Mammary epithelial cell (primary cell): ENCODE measurements at regions of chr10 and their contacts with region 1.

Region 1: DNA sequence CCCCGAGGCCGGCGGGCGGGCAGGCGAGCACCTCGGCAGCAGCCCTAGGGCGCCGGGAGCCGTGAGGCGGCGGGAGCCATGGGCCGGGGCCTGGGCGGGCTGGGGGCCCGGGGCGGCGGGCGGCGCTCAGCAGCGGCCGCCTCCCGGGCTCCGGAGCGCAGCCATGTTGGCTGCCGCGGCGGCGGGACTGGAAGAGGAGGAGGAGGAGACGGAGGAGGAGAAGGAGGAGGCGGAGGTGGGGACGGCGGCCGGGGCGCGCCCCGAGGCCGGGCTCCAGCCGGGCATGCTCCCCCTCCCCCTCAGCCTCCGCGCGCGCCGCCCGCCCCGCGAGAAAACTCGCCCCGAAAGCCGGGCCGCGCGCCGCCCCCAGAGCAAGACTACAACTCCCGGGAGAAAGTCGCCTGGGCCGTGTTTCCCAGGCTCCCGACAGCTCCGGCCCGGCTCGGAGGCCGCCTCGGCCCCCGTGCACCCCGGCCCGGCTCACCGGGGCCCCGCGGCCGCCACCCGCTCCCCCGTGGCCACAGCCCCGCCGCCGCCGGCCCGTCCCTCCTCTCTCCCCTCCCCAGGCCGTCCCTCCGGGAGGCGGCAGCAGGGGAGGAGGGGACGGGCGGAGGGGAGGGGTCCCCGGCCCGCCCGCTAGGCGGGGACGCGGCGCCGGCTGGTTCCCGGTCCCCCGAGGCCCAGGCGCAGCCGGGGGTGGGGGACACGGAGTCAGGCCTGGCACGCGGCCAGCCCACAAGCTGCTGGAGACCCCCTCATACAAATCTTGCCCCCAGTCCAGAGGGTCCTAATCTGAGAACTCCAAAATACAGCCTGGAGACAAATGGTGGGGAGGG is at the start of gene DLG5:
- DNase-seq: peak; percentile 42
- H3K4me3 ChIP-seq: peak within 1 kb of the TSS; percentile 71 to 87 (median 76)
- H3K27ac ChIP-seq: peak within 1 kb of the TSS; percentile 40
- H3K4me1 ChIP-seq: peaks cover 34% of the 10 kb centered on the region
- H3K27me3 ChIP-seq: no peaks in the 10 kb centered on the region
- CTCF ChIP-seq: no peak
- total RNA-seq, gene DLG5: 40.8 to 76.5 TPM

Region 2: DNA sequence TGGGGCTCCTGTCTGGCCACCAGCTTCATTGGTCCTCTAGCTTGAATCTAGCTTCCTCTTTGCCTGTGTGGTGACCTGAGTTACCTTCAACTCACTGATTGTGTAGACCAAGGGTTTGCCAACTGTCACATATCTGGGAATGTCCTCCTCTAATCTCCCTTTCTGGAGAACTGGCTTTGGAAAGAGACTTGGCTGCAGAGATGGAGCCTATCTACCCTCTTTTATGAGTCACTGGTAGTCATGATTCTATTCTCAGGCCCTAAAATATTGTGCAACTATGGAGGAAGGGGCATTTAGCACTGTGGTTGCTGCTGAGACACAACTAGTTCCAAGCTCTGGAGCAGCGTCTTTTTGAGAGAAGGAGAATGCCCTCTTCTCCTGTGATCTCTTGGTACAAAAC is 980.5 kb before region 1 on chr10:
- CTCF ChIA-PET with region 1: no interaction called
- dilution Hi-C with region 1: no loop called
- in situ Hi-C with region 1: no loop called
- intact Hi-C with region 1: no loop called
- DNase-seq: peak; percentile 10
- H3K4me3 ChIP-seq: no peak overlapping the region
- H3K27ac ChIP-seq: no peak overlapping the region
- H3K4me1 ChIP-seq: no peaks in the 10 kb centered on the region
- H3K27me3 ChIP-seq: no peaks in the 10 kb centered on the region
- CTCF ChIP-seq: no peak

Region 3: DNA sequence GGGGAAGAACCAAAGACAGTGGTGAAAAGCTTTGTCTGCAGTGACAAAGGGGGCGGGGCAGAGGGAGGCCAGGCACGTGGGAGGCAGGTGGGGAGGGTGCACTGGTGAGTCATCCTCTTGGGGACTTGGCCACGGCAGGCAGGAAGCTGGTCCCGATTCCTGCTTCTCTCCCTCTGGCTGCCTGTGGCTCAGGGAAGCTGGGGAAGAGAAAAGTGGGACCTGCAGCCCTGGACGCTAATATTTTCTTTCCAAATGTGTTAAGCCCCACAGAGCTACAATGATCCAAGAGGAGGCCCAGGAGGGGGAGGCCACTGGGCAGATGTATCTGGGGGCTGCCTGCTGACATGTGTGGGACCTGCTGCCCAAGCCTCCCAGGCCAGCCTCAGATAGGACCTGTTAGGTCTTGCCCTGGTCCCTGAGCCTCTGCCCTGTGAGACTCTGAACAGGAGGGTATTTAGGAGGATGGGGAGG is 521.0 kb before region 1 on chr10:
- CTCF ChIA-PET with region 1: no interaction called
- dilution Hi-C with region 1: no loop called
- in situ Hi-C with region 1: no loop called
- intact Hi-C with region 1: no loop called
- DNase-seq: peak; percentile 66
- H3K4me3 ChIP-seq: no peak overlapping the region
- H3K27ac ChIP-seq: no peak overlapping the region
- H3K4me1 ChIP-seq: peaks cover 39% of the 10 kb centered on the region
- H3K27me3 ChIP-seq: no peaks in the 10 kb centered on the region
- CTCF ChIP-seq: no peak

Region 4: GRCh38 chr10:77873536-77874380 is 53.0 kb before region 1 on chr10:
- CTCF ChIA-PET with region 1: interaction called, 3 read pairs
- dilution Hi-C with region 1: no loop called
- in situ Hi-C with region 1: no loop called
- intact Hi-C with region 1: loop called (anchors 2 kb)
- DNase-seq: peak; percentile 91
- H3K4me3 ChIP-seq: peak overlapping the region in 1 of 3 experiments; percentile 8
- H3K27ac ChIP-seq: peak overlapping the region; percentile 78
- H3K4me1 ChIP-seq: peaks cover 74% of the 10 kb centered on the region
- H3K27me3 ChIP-seq: no peaks in the 10 kb centered on the region
- CTCF ChIP-seq: no peak

Region 5: DNA sequence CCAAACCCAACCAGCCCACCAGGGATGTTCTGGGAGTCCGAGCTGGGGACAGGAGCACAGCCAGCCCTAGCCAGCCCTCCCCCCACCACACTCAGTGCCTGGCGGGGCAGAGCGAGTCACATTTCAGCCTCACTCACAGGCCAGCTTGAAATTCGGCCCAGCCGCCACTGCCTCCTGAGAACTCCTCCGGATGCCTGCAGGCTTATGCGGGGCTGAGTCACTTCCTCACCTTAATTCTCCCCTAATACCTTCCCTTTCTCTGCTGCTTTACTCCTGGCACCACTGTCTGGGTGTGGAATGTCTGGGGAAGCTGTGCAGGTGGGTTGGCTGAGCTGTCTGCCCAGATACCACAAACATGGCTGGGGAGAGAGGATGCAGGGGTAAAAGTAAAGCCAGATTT is 22.4 kb after region 1 on chr10:
- CTCF ChIA-PET with region 1: no interaction called
- dilution Hi-C with region 1: no loop called
- in situ Hi-C with region 1: no loop called
- intact Hi-C with region 1: loop called (anchors 2 kb)
- DNase-seq: peak; percentile 97
- H3K4me3 ChIP-seq: no peak overlapping the region
- H3K27ac ChIP-seq: peak overlapping the region; percentile 59
- H3K4me1 ChIP-seq: peaks cover 18% of the 10 kb centered on the region
- H3K27me3 ChIP-seq: no peaks in the 10 kb centered on the region
- CTCF ChIP-seq: no peak

Region 6: GRCh38 chr10:77970869-77971803 is 44.4 kb after region 1 on chr10:
- CTCF ChIA-PET with region 1: interaction called, 22 read pairs
- dilution Hi-C with region 1: no loop called
- in situ Hi-C with region 1: no loop called
- intact Hi-C with region 1: loop called (anchors 2 kb)
- DNase-seq: no peak
- H3K4me3 ChIP-seq: no peak overlapping the region
- H3K27ac ChIP-seq: no peak overlapping the region
- H3K4me1 ChIP-seq: peaks cover 6% of the 10 kb centered on the region
- H3K27me3 ChIP-seq: no peaks in the 10 kb centered on the region
- CTCF ChIP-seq: no peak